ENCODE measurements at regions of chr6 and their contacts with region 1.

Region 1: DNA sequence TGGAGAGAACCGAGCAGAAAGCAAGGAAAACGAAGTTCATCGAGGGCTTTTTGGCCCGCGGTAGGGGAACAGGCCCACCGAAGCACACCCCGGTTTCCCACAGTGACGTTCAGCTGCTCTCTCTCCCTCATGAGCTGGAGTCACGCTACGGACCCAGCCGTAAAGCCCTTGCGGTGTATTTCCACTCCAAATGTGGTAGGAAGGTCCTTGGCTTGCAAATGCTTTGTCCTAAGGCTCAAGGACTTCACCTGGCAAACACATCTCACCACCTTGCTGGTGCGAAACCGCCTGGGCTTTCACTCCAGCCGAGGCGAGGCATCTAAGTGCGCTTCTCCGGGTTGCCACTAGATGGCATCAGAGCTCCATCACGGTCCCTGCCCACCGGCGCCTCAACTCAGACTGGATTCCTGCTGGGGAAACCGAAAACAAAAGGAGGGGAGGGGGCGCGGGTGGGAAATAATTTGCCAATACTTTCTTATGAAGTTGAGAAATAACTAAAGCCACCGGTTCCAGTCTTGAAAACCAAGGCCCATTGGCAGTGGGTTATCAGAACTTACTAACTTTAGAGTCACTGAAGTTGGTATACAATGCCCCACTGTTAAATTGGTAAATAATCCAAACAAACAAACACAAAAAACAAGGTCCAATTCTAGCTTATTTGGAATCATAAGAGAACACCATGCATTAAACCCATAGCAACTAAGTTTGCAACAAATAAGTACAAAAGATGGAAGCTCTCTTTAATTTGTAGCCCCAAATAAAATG is 13.4 kb upstream of the FOXC1 start:
- DNase-seq: no peak
- H3K4me3 ChIP-seq: no peak overlapping the region
- H3K27ac ChIP-seq: no peak overlapping the region
- H3K4me1 ChIP-seq: no peaks in the 10 kb centered on the region
- H3K27me3 ChIP-seq: no peaks in the 10 kb centered on the region
- CTCF ChIP-seq: peak; percentile 83 to 93 (median 86)
- POLR2A ChIP-seq: no peak

Region 2: GRCh38 chr6:1535295-1535694 is 61.0 kb before region 1 on chr6:
- intact Hi-C with region 1: no loop called
- DNase-seq: no peak
- H3K4me3 ChIP-seq: no peak overlapping the region
- H3K27ac ChIP-seq: no peak overlapping the region
- H3K4me1 ChIP-seq: no peaks in the 10 kb centered on the region
- H3K27me3 ChIP-seq: no peaks in the 10 kb centered on the region
- CTCF ChIP-seq: no peak
- POLR2A ChIP-seq: no peak

Region 3: DNA sequence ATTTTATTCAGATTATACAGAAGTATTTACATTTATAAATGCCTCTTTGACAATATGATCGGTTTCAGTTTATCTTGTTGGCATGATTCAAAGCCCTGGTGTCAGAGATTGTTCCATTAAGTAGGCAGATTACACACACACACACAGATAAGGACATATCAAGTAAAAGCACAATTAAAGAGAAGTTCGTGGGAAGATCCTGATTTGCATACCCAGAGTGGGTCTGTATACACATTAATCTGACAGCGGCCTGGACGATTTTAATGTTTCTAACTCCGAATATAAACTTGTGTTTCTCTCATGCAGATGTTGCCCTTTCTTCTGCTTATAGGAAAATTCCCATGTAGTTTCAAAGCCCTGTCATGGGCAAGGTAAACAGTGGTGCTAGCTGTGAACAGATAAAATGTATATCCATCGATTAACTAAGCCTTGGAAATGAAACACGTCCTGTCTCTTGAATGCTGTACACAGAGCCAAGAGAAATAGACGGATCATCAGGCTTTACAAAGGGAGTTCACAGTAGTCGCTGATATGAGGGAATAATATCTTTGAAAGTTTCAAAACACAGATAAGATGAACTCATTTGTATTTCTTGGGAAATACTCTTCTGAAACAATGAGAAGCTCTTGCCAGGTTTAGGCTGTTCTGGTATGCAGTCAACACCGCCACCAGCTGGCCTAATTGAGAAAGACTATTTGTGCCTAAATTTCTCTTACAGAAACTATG is 757.3 kb after region 1 on chr6:
- intact Hi-C with region 1: loop called (anchors 5 kb)
- DNase-seq: no peak
- H3K4me3 ChIP-seq: no peak overlapping the region
- H3K27ac ChIP-seq: no peak overlapping the region
- H3K4me1 ChIP-seq: no peaks in the 10 kb centered on the region
- H3K27me3 ChIP-seq: no peaks in the 10 kb centered on the region
- CTCF ChIP-seq: peak; percentile 33 to 68 (median 67)
- POLR2A ChIP-seq: no peak

Region 4: DNA sequence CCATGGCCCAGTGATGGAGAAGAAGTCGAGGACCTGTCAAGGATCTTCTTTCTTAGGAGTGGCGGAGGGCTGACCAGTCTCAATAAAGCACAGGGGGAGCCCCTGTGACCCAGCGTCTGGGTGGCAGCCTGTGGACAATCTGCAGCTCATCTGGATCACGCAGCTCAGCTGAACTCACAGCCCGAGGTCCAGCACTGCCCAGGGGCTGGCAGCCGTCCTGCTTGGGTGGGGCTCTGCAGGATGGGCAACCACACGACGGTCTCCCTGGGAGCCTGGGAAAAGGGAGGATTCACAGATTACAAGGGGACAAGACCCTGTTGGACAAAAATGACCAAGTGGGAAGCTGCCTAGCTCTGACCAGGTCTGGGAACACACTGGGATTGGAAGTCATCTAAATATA is 1043.6 kb after region 1 on chr6:
- intact Hi-C with region 1: loop called (anchors 5 kb)
- DNase-seq: peak in 1 of 2 donors; percentile 72
- H3K4me3 ChIP-seq: no peak overlapping the region
- H3K27ac ChIP-seq: no peak overlapping the region
- H3K4me1 ChIP-seq: peaks cover 2% of the 10 kb centered on the region
- H3K27me3 ChIP-seq: no peaks in the 10 kb centered on the region
- CTCF ChIP-seq: no peak
- POLR2A ChIP-seq: no peak